CD4-positive, alpha-beta memory T cell (primary cell): ENCODE measurements at regions of chr16 and their contacts with region 1.

Region 1: DNA sequence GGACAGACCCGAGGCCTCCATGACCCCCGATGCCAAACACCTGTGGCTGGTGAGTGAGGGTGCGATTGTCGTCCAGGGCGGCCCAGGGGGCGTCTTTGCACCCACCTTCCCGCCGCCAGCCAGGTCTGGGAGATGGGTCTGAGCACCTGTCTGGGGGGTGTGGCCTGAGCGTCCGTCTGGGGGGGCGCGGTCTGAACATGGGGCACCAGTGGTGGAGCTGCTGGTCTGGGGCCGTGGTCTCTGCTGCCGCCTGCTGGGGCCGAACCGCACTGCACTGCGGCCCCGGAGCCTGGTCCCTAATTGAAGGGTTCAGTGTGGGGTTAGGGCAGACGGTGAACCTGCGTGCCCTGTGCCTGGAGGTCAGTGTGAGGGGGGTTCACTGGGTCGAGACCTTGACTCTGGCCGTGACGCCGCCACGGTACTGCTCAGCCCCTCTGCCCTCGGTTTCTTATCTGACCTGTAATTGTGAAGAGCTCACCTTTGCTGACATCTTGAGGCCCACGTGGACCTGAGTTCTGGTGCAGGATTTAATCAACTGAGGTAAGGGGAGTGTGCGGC is 12.6 kb upstream of the TCF25 start:
- DNase-seq: peak; percentile 71 to 80 (median 74)
- H3K4me3 ChIP-seq: no peak overlapping the region
- H3K4me3 Mint-ChIP-seq: peak overlapping the region in 2 of 8 donors; percentile 30 to 39
- H3K27ac ChIP-seq: no peak overlapping the region
- H3K27ac Mint-ChIP-seq: peak overlapping the region in 5 of 7 donors; percentile 44 to 85 (median 80)
- H3K4me1 ChIP-seq: peaks cover 41% of the 10 kb centered on the region
- H3K4me1 Mint-ChIP-seq: peaks cover 27 to 42% (median 34%) of the 10 kb centered on the region in 4 donors
- H3K27me3 ChIP-seq: no peaks in the 10 kb centered on the region
- H3K27me3 Mint-ChIP-seq: no peaks in the 10 kb centered on the region

Region 2: DNA sequence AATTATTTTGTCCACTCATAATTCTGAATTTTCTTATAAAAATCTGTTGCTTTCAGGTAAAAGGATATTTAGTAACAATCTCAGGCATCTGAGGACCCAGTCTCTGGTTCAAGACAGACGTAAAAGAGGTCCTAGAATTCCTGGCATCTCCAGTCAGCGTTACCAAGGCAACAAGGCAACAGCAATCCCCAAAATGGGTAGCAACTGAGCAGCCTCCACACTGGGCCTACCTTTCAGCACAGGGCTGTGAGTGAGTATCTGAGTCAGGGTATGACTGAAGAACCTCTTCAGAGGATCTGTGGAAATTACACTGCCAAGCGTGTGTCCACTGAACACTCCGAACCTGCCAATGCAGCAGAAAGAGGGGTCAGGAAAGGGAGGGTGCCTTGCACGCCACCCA is 65.2 kb before region 1 on chr16:
- CTCF ChIA-PET with region 1: interaction called, 25 read pairs
- POLR2A ChIA-PET with region 1: no interaction called
- intact Hi-C with region 1: no loop called
- DNase-seq: no peak
- H3K4me3 ChIP-seq: no peak overlapping the region
- H3K4me3 Mint-ChIP-seq: no peak overlapping the region
- H3K27ac ChIP-seq: no peak overlapping the region
- H3K27ac Mint-ChIP-seq: no peak overlapping the region
- H3K4me1 ChIP-seq: no peaks in the 10 kb centered on the region
- H3K4me1 Mint-ChIP-seq: peaks cover 6 to 14% (median 8%) of the 10 kb centered on the region in 4 donors
- H3K27me3 ChIP-seq: no peaks in the 10 kb centered on the region
- H3K27me3 Mint-ChIP-seq: no peaks in the 10 kb centered on the region

Region 3: GRCh38 chr16:89815639-89816348 is 45.0 kb before region 1 on chr16:
- CTCF ChIA-PET with region 1: interaction called, 6 read pairs
- POLR2A ChIA-PET with region 1: interaction called, 4 read pairs
- intact Hi-C with region 1: loop called (anchors 2 kb)
- DNase-seq: no peak
- H3K4me3 ChIP-seq: peak overlapping the region in 1 of 2 donors; percentile 83
- H3K4me3 Mint-ChIP-seq: peak overlapping the region; percentile 71 to 85 (median 82)
- H3K27ac ChIP-seq: no peak overlapping the region
- H3K27ac Mint-ChIP-seq: peak overlapping the region in 2 of 7 donors; percentile 37 to 46
- H3K4me1 ChIP-seq: peaks cover 28% of the 10 kb centered on the region
- H3K4me1 Mint-ChIP-seq: peaks cover 7 to 22% (median 8%) of the 10 kb centered on the region in 4 donors
- H3K27me3 ChIP-seq: no peaks in the 10 kb centered on the region
- H3K27me3 Mint-ChIP-seq: no peaks in the 10 kb centered on the region

Region 4: DNA sequence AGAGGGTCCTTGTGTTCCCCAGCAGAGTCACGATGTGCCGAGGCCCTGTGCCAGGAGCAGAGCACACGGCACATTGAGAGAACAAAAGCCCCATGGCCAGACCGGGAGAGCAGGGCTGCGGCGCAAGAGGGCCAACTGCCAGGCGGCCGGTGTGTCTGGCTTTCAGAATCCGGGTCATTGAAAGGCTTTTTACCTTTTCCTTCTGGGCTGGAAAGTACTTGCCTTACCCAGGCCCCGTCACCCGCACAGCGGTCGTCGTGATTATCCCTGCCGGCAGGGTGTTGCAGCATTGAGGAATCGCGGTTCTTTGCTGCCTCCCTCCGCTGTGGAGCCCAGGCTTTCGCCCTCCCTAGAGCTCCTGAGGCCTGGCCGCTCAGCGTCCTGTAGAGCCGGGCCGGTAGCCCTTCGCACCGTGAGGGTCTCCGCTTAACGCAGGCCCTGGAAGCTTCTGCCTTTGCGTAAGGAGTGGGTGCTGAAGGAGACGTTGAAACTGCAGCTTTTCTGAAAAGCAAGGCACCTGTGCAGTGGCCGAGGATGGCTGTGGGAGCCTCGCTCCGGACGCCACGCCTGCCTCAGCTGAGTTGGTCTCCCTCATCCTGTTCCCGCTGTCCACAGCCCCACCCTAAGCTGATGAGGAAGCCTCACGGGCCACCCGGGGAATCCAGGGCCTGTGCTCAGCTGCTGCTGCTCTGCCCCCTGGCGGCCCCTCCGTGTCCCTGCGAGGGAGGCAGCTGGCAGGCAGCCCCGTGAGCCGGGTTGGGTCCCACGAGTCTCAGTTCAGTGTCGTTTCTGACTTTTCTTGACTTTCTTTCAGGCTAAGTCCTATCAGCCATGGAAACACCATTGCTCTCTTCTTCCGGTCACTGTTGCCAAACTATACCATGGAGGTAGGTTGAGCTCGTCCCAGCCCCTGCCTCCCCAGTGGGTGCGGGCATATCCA is 49.2 kb after region 1 on chr16:
- CTCF ChIA-PET with region 1: interaction called, 12 read pairs
- POLR2A ChIA-PET with region 1: interaction called, 3 read pairs
- intact Hi-C with region 1: no loop called
- DNase-seq: peak; percentile 61 to 73 (median 65)
- H3K4me3 ChIP-seq: no peak overlapping the region
- H3K4me3 Mint-ChIP-seq: no peak overlapping the region
- H3K27ac ChIP-seq: no peak overlapping the region
- H3K27ac Mint-ChIP-seq: peak overlapping the region in 3 of 7 donors; percentile 59 to 78 (median 73)
- H3K4me1 ChIP-seq: peaks cover 3% of the 10 kb centered on the region
- H3K4me1 Mint-ChIP-seq: peaks cover 3 to 23% (median 5%) of the 10 kb centered on the region in 4 donors
- H3K27me3 ChIP-seq: no peaks in the 10 kb centered on the region
- H3K27me3 Mint-ChIP-seq: no peaks in the 10 kb centered on the region